ENCODE measurements at regions of chr9 and their contacts with region 1.

Region 1: DNA sequence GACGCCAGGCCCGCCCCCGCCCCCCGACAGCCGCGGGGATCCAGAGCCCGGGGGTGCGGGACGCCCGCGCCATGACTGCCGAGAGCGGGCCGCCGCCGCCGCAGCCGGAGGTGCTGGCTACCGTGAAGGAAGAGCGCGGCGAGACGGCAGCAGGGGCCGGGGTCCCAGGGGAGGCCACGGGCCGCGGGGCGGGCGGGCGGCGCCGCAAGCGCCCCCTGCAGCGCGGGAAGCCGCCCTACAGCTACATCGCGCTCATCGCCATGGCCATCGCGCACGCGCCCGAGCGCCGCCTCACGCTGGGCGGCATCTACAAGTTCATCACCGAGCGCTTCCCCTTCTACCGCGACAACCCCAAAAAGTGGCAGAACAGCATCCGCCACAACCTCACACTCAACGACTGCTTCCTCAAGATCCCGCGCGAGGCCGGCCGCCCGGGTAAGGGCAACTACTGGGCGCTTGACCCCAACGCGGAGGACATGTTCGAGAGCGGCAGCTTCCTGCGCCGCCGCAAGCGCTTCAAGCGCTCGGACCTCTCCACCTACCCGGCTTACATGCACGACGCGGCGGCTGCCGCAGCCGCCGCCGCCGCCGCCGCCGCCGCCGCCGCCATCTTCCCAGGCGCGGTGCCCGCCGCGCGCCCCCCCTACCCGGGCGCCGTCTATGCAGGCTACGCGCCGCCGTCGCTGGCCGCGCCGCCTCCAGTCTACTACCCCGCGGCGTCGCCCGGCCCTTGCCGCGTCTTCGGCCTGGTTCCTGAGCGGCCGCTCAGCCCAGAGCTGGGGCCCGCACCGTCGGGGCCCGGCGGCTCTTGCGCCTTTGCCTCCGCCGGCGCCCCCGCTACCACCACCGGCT is 1.0 kb downstream of the FOXE1 start:
- DNase-seq: no peak
- H3K4me3 ChIP-seq: peak overlapping the region; percentile 40 to 69 (median 62)
- H3K27ac ChIP-seq: no peak overlapping the region
- H3K4me1 ChIP-seq: peaks cover 12% of the 10 kb centered on the region
- H3K27me3 ChIP-seq: peaks cover 48% of the 10 kb centered on the region
- CTCF ChIP-seq: peak in 2 of 3 experiments; percentile 23 to 73

Region 2: DNA sequence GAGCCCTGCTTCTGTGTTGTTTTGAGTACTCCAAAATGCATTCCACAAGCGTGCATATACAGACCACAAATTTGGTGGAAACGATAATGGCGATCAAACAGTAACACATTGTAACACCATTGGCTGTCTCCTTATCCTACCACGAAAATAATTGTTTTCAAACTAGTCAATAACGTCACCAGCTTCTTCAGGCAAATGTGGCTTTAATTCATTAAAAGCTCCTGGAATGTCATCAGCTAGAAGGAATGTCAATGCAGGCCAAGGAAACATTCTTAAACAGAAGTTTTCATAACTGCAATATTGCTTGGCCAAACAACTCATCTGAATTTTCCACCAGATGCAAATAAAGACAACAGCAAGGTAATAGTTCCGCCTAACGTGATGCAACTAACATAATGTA is 85.3 kb before region 1 on chr9:
- dilution Hi-C with region 1: loop called (anchors 10 kb)
- DNase-seq: no peak
- H3K4me3 ChIP-seq: peak overlapping the region in 1 of 3 experiments; percentile 5
- H3K27ac ChIP-seq: peak overlapping the region; percentile 19
- H3K4me1 ChIP-seq: peaks cover 35% of the 10 kb centered on the region
- H3K27me3 ChIP-seq: no peaks in the 10 kb centered on the region
- CTCF ChIP-seq: no peak